Right ventricle myocardium inferior (tissue), 1 donor: ENCODE measurements at regions of chr6 and their contacts with region 1.

Region 1: GRCh38 chr6:161418463-161418945 is 144.6 kb upstream of the AGPAT4 start:
- DNase-seq: no peak
- ATAC-seq: peak; percentile 59

Region 2: DNA sequence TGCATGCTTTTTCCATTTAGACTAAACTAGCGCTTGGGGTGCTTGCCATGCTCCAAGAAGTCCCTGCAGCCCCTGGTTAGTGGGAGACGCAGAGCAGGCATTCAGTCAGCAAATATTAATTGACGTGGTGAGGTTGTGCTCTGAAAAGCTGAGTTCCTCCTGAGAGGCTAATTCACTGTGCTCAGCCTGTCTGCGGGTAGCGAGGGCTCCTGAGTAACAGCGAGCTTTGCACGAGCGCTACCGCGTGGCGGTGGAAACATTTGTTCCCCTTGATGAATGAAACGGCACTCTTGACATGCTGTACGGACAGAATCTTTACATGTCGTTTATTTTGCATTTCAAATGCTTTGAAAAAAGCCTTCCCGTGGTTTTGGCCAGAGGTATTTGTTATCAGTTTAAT is 26.0 kb after region 1 on chr6:
- intact Hi-C with region 1: loop called (anchors 2 kb)
- DNase-seq: no peak
- ATAC-seq: peak; percentile 48

Region 3: GRCh38 chr6:161498359-161498758 is 79.9 kb after region 1 on chr6:
- intact Hi-C with region 1: loop called (anchors 1 kb)
- DNase-seq: no peak
- ATAC-seq: peak; percentile 55

Region 4: DNA sequence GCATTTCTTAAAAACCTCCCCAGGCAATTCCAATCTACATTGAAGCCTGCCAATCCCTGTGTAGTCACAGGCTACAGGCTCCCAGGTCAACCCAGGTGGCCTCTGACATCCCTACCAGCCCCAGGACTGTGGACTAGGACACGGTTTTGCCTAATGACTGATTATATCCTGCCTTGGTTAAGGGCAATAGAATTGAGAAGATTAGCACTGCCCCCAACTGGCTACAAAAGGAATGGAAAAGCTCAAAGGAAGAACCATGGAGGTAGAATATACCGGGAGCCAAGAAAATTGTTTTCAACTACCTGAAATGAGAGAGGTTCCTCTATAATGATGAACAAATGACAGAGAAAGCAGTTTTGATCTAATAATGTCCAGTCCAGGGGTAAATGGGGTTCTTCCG is 276.5 kb after region 1 on chr6:
- intact Hi-C with region 1: loop called (anchors 5 kb)
- DNase-seq: no peak
- ATAC-seq: no peak

Region 5: DNA sequence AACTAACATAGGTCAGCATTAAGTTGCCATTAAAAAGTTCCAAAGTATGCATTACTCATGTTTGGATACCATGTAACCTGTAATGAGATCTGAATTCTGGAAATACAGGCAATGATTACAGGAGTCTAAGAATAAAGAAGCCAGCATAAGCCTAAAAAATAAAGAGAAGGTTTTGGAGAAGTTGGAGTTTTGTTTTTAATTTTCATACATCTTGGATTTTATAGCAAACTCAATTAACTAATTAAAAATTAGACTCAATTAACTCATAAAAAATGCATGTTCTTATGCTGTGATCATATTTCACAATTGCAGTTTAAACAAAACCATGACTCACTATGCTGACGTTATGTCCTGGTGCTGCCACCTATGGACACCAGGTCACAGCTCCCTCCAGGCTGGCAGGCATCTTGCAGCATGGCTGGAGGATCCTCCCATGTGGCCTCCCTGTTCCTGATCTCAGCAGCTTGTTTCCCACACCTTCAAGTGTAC is 504.2 kb after region 1 on chr6:
- intact Hi-C with region 1: loop called (anchors 10 kb)
- DNase-seq: no peak
- ATAC-seq: peak; percentile 54